WTC11 (cell line): ENCODE measurements at regions of chr9 and their contacts with region 1.

Region 1: GRCh38 chr9:88310310-88310995 is 77.8 kb upstream of the SPIN1 start:
- DNase-seq: peak; percentile 65
- ATAC-seq: peak; percentile 63
- H3K4me3 Mint-ChIP-seq: no peak overlapping the region
- H3K27ac Mint-ChIP-seq: peak overlapping the region; percentile 39
- H3K4me1 Mint-ChIP-seq: peaks cover 54% of the 10 kb centered on the region
- H3K27me3 Mint-ChIP-seq: no peaks in the 10 kb centered on the region
- CTCF ChIP-seq: no peak

Region 2: GRCh38 chr9:88258027-88258426 is 52.4 kb before region 1 on chr9:
- CTCF ChIA-PET with region 1: no interaction called
- POLR2A ChIA-PET with region 1: no interaction called
- DNase-seq: no peak
- ATAC-seq: no peak
- H3K4me3 Mint-ChIP-seq: no peak overlapping the region
- H3K27ac Mint-ChIP-seq: peak overlapping the region; percentile 21; the same call in 1 of the 2 replicates
- H3K4me1 Mint-ChIP-seq: peaks cover 16% of the 10 kb centered on the region
- H3K27me3 Mint-ChIP-seq: no peaks in the 10 kb centered on the region; the same call in 1 of the 2 replicates
- CTCF ChIP-seq: no peak

Region 3: GRCh38 chr9:88280816-88281382 is 29.6 kb before region 1 on chr9:
- CTCF ChIA-PET with region 1: interaction called, 11 read pairs
- POLR2A ChIA-PET with region 1: no interaction called
- DNase-seq: peak; percentile 34
- ATAC-seq: peak; percentile 77
- H3K4me3 Mint-ChIP-seq: no peak overlapping the region
- H3K27ac Mint-ChIP-seq: no peak overlapping the region
- H3K4me1 Mint-ChIP-seq: peaks cover 30% of the 10 kb centered on the region
- H3K27me3 Mint-ChIP-seq: peaks cover 5% of the 10 kb centered on the region
- CTCF ChIP-seq: no peak

Region 4: DNA sequence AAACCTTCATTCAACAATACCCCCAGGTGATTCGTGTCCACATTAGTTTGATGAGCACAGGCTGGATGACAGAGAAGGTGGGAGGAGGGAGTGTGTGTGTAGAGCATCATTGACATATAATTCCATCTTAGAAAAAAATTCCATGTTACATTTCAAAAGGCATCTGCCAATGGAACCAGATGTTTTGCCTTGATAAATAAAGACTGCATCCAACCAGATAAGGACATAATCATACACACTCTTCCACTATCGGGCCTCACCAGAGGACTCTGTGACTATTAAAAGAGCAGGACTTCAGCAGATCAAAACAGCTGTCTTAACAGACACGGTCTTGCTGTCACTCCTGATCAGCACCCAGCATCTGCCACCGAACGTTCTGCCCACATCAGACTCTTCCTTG is 18.6 kb before region 1 on chr9:
- CTCF ChIA-PET with region 1: no interaction called
- POLR2A ChIA-PET with region 1: no interaction called
- DNase-seq: no peak
- ATAC-seq: no peak
- H3K4me3 Mint-ChIP-seq: no peak overlapping the region
- H3K27ac Mint-ChIP-seq: no peak overlapping the region
- H3K4me1 Mint-ChIP-seq: no peaks in the 10 kb centered on the region
- H3K27me3 Mint-ChIP-seq: no peaks in the 10 kb centered on the region; the same call in 1 of the 2 replicates
- CTCF ChIP-seq: no peak

Region 5: DNA sequence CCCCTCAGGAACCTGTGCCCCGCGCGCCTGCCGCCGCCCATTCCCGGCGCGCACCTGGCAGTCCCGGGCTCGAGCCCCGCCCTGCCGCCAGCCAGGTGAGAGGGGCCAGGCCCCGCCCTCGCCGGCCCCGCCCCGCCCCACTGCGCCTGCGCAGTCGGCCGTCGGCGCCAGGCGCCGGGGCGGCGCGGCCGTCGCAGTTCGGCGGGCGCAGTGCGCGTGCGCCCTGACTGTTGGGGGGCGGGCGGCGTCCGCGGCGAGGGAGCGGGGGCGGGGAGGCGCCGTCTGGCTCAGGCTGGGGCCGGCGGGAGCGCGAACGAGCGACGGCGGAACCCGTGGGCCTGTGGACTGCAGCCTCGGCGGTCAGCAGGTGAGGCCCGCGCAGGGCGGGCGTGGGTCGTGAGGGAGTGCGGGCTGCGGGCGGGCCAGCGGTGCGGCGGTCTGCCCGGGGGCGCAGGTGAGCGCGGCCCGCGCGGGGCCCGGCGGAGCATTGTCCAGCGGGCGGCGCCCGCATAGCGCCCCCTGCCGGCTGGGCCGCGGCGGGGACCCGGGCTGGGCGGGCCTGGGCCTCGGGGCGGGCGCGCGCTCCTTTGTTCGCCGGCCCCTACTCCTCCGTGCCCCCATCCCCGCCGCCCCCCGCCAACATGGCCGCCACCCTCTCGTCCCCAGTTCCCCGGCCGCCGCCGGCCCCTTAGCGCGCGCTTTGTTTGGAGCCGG is 77.9 kb after region 1 on chr9 and contains the start of gene SPIN1:
- CTCF ChIA-PET with region 1: interaction called, 11 read pairs
- POLR2A ChIA-PET with region 1: no interaction called
- DNase-seq: peak; percentile 80
- ATAC-seq: peak; percentile 77
- H3K4me3 Mint-ChIP-seq: peak within 1 kb of the TSS; percentile 94
- H3K27ac Mint-ChIP-seq: peak within 1 kb of the TSS; percentile 96
- H3K4me1 Mint-ChIP-seq: peaks cover 59% of the 10 kb centered on the region
- H3K27me3 Mint-ChIP-seq: no peaks in the 10 kb centered on the region
- CTCF ChIP-seq: peak; percentile 67
- total RNA-seq, gene SPIN1: 122 to 124 TPM (median 123 TPM) in 3 replicates

Region 6: DNA sequence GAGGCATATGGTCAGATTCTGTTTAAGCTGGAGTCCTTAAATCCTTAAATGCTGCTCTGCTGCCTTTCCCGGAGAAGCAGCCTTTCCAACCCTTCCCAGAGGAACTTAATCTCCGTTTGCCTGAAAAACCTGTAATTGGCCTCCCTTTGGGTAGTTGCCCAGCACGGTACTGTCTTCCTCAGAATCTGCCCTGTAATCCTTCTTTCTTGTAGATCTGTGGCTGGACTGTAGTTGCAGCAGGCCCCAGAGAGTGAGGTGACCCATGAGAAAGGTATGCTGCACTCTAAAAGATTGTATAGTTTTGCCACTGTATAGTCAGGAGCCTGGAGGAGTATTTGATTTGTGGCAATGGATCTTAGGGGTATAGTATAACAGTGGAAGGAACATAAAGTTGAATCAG is 89.5 kb after region 1 on chr9:
- CTCF ChIA-PET with region 1: no interaction called
- POLR2A ChIA-PET with region 1: interaction called, 10 read pairs
- DNase-seq: no peak
- ATAC-seq: no peak
- H3K4me3 Mint-ChIP-seq: no peak overlapping the region
- H3K27ac Mint-ChIP-seq: peak overlapping the region; percentile 90
- H3K4me1 Mint-ChIP-seq: peaks cover 44% of the 10 kb centered on the region
- H3K27me3 Mint-ChIP-seq: no peaks in the 10 kb centered on the region
- CTCF ChIP-seq: no peak

Region 7: DNA sequence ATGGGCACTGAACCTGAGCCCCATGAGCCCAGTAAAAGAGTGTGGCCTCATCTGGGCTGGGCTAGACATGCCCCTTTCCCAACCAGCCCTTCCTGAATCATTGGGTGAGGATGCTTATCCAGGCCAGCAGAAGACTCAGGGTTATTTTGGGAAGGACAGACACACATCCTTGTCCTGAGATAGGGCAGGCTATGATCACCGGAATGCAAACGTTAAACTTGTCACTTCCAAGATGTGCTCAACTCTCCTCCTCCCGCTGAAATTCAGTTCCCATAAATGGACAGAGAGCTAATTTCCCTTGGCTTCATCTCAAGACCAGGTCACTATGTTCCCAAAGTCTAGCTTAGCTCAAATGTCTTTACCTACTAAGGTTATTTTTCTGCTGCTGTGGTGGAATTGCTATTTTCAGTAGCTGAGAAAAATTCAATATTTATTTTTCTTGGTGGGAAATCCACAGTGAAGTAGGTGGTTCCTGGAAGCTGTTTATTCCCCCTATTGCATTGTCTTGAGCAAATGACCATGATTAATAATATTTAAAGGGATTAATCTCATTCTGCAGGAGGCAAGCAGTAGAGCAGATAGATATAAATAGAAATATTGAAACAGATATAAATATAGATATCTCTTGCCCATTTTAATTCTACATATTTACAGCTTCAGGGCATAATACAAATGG is 294.5 kb after region 1 on chr9:
- CTCF ChIA-PET with region 1: no interaction called
- POLR2A ChIA-PET with region 1: no interaction called
- DNase-seq: no peak
- ATAC-seq: no peak
- H3K4me3 Mint-ChIP-seq: no peak overlapping the region
- H3K27ac Mint-ChIP-seq: no peak overlapping the region
- H3K4me1 Mint-ChIP-seq: no peaks in the 10 kb centered on the region
- H3K27me3 Mint-ChIP-seq: 0 out of 2 replicates have a peak, but pooled peaks cover 4% of the 10 kb centered on the region
- CTCF ChIP-seq: no peak